Activated CD4-positive, alpha-beta memory T cell treated with anti-CD3 and anti-CD28 coated beads for 36 hours (primary cell): ENCODE measurements at regions of chr10 and their contacts with region 1.

Region 1: DNA sequence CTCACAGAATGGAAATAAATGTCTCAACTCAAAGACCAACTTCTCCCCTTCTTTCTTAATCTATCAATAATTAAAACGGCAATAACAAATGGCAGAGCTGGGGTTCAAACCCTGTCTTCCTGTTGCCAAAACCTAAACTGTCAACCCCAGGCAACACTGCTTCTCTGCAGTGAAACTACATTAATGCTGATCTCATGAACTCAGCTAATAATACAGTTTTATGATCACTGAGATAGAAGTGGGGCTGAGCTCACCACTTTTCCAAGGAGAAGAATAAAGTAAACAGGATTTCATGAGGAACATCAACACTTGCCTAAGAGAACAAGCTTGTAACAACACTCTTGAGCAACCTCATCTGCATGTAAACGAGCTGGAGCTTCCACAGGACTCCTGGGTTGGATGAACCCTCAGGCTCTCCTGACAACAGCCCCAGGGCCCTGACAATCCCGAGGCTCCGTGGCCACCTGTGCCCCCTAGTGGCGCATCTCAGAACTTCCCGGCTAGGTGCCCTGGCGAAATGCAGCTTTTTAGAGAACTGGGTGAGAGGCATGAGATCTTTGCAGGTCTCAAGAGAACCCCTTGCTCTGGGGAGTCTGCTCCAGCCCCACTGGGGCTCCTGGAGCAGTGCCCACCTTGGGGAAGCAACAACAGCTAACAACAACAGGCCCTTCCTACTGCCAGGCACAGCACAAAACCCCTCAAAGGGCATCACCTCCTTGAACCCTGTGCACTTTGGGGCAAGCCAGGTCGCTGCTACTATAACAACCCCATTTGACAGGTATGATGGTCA is 169.3 kb downstream of the SH3PXD2A start:
- DNase-seq: peak; percentile 85
- H3K4me3 Mint-ChIP-seq: no peak overlapping the region
- H3K27ac Mint-ChIP-seq: no peak overlapping the region
- H3K4me1 Mint-ChIP-seq: peaks cover 5% of the 10 kb centered on the region
- H3K27me3 Mint-ChIP-seq: no peaks in the 10 kb centered on the region

Region 2: GRCh38 chr10:103542764-103543616 is 143.1 kb before region 1 on chr10:
- CTCF ChIA-PET with region 1: interaction called, 10 read pairs
- POLR2A ChIA-PET with region 1: no interaction called
- intact Hi-C with region 1: no loop called
- DNase-seq: peak; percentile 64
- H3K4me3 Mint-ChIP-seq: peak overlapping the region; percentile 51
- H3K27ac Mint-ChIP-seq: peak overlapping the region; percentile 50
- H3K4me1 Mint-ChIP-seq: peaks cover 12% of the 10 kb centered on the region
- H3K27me3 Mint-ChIP-seq: peaks cover 7% of the 10 kb centered on the region

Region 3: GRCh38 chr10:103592186-103593021 is 93.7 kb before region 1 on chr10:
- CTCF ChIA-PET with region 1: interaction called, 43 read pairs
- POLR2A ChIA-PET with region 1: interaction called, 4 read pairs
- intact Hi-C with region 1: no loop called
- DNase-seq: peak; percentile 62
- H3K4me3 Mint-ChIP-seq: no peak overlapping the region
- H3K27ac Mint-ChIP-seq: no peak overlapping the region
- H3K4me1 Mint-ChIP-seq: no peaks in the 10 kb centered on the region
- H3K27me3 Mint-ChIP-seq: no peaks in the 10 kb centered on the region

Region 4: GRCh38 chr10:103605359-103606095 is 80.5 kb before region 1 on chr10:
- CTCF ChIA-PET with region 1: interaction called, 77 read pairs
- POLR2A ChIA-PET with region 1: interaction called, 3 read pairs
- intact Hi-C with region 1: loop called (anchors 1 kb)
- DNase-seq: peak; percentile 60
- H3K4me3 Mint-ChIP-seq: no peak overlapping the region
- H3K27ac Mint-ChIP-seq: no peak overlapping the region
- H3K4me1 Mint-ChIP-seq: no peaks in the 10 kb centered on the region
- H3K27me3 Mint-ChIP-seq: no peaks in the 10 kb centered on the region

Region 5: DNA sequence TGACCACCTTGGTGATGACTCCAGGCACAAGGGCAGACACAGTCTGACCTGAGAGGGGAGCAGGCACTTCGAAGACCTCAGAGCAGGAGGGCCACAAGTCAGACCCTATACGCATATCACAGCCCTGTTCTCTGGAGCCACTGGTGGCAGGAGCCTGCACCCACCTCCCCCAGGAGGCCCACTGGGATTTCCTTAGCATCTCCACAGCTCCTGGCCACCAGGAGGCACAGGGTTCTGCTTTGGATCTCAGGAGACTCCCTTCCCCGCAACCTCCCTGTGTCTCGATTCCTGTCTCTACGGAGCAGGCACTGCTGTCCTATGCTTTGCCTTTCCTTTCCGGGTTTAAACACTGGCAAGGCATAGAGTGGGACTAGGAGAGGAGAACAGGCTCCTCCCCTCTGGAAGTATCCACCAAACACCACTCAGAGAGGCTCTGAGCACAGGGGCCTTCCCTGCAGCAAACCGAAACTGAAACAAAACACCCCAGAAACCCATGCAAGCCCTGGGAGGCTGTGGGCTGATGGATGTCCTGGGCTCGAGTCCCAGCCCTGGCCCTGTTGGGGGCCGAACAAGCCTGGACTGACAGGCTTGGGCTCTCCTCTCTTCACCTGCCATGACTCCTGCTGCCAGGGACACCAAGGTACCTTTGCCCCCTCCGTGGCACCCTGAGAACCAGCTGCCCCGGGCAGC is 26.3 kb before region 1 on chr10:
- CTCF ChIA-PET with region 1: interaction called, 28 read pairs
- POLR2A ChIA-PET with region 1: no interaction called
- intact Hi-C with region 1: no loop called
- DNase-seq: peak; percentile 71
- H3K4me3 Mint-ChIP-seq: peak overlapping the region; percentile 82
- H3K27ac Mint-ChIP-seq: peak overlapping the region; percentile 74
- H3K4me1 Mint-ChIP-seq: peaks cover 5% of the 10 kb centered on the region
- H3K27me3 Mint-ChIP-seq: no peaks in the 10 kb centered on the region

Region 6: DNA sequence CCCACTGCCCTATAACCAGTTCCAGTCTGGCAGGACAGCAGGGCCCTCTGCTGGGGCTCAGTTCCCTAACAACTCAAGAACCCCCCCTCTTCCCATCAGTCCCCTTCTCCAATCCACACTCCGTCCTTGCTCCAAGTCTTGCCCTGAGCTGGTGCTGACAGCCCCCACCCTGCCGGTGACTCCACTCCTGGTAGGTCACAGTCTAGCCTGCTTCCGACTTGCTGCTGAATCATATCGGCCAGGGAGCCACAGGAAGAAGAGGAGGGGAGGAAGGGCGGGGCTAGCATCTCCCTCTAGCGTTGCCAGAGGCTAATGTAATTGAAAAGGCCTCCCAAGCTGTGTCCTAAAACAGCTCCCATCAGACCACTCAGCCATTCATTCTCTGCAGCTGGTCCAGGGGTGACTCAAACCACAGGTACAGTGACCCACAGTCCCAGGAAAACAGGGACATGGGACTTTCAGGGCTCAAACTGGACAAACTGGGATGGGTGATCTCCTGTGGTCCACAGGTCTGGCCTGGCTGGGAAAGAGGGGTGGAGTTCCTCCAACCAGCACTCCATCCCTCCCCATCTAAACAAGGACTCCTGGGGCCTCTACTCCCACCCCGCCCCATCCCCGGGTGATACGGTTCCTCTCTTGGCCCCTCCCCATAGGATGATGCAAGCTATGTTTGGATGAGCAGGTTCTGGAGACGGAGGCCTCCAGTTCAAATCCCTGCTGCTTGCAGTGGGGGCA is 10.5 kb after region 1 on chr10:
- CTCF ChIA-PET with region 1: interaction called, 37 read pairs
- POLR2A ChIA-PET with region 1: no interaction called
- intact Hi-C with region 1: no loop called
- DNase-seq: peak; percentile 92
- H3K4me3 Mint-ChIP-seq: peak overlapping the region; percentile 48
- H3K27ac Mint-ChIP-seq: peak overlapping the region; percentile 77
- H3K4me1 Mint-ChIP-seq: peaks cover 30% of the 10 kb centered on the region
- H3K27me3 Mint-ChIP-seq: no peaks in the 10 kb centered on the region